ENCODE measurements at regions of chr11 and their contacts with region 1.

Region 1: DNA sequence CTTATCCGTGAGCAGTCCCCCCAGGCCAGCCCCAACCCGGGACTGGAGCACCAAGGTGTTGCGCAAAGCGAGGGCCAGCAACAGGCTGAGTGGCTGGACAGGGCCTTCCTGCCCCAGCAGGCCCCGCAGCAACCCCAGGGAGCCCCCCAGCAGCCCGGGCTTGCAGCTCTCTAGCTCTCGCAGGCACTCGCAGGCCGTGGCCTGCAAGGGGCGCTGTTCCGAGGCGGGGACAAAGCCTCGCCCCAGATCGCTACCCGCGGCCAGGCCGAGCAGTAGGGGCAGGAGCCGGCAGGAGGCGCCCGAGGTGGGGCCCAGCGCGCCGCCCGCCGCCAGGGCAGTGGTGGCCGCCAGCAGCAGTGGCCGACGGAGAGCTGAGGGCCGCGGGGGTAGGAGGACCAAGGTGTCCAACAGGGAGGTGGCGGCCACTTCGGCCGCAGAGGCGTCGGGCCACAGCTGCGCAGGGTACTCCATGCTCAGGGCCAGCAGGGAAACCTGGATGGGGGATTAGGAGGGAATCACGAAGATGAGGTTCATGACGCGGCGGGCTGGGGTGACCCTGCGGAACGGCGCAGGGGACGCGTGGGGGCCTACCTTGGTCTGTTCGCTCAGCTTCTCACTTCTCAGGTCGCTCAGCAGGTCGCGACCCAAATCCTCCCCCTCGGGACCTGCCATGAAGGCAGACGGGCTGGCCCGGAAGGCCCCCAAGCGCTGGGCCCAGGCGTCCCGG is 762 bp downstream of the AP5B1 start:
- DNase-seq: peak; percentile 96
- H3K4me3 Mint-ChIP-seq: peak overlapping the region; percentile 91
- H3K27ac Mint-ChIP-seq: peak overlapping the region; percentile 92
- H3K4me1 Mint-ChIP-seq: peaks cover 23% of the 10 kb centered on the region
- H3K27me3 Mint-ChIP-seq: peaks cover 15% of the 10 kb centered on the region

Region 2: GRCh38 chr11:65662799-65663638 is 117.0 kb before region 1 on chr11 and contains the start of gene RELA:
- intact Hi-C with region 1: no loop called
- DNase-seq: peak; percentile 97
- H3K4me3 Mint-ChIP-seq: peak within 1 kb of the TSS; percentile 92
- H3K27ac Mint-ChIP-seq: peak within 1 kb of the TSS; percentile 93
- H3K4me1 Mint-ChIP-seq: peaks cover 24% of the 10 kb centered on the region
- H3K27me3 Mint-ChIP-seq: no peaks in the 10 kb centered on the region
- total RNA-seq, gene RELA: 95.7 and 98.2 TPM in 2 replicates

Region 3: DNA sequence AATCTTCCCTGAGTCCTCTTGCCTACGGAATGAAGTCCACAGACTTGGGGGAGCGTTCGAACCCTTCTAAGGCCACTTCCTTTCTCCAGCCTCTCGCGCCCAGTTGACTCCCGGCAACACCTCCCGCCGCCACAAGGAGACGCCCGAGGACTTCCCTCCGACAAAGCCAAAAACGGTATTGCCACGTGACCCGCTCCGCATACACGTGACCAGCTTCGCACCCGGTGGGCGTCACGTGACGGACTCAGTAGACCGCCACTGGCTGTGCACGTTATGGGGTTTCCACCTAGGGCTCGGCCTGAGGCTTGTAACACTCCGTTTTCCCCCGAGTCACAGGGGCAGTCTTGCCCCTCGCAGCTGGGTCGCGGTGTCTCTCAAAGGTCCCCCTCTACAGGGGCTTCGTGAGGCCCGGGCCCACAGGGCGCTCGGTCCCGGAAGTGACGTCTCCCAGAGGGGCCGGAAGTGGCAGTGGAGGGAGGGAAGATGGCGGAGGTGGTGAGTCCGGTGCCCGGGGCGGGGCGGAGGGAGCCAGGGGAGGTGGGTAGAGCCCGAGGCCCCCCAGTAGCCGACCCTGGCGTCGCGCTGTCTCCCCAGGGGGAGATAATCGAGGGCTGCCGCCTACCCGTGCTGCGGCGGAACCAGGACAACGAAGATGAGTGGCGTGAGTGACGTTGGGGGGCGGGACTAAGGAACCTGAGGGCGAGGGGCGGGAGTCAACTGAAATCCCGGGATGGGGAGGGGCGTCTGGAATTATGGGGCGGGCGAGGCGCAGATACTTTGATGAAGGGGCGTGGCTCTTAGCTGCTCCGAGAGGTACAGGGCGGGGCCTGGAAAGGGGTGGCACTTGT is 68.0 kb before region 1 on chr11 and contains the start of gene KAT5:
- intact Hi-C with region 1: loop called (anchors 2 kb)
- DNase-seq: peak; percentile 99
- H3K4me3 Mint-ChIP-seq: peak within 1 kb of the TSS; percentile 93
- H3K27ac Mint-ChIP-seq: peak within 1 kb of the TSS; percentile 99
- H3K4me1 Mint-ChIP-seq: peaks cover 22% of the 10 kb centered on the region
- H3K27me3 Mint-ChIP-seq: no peaks in the 10 kb centered on the region
- total RNA-seq, gene KAT5: 71.6 and 72.3 TPM in 2 replicates

Region 4: DNA sequence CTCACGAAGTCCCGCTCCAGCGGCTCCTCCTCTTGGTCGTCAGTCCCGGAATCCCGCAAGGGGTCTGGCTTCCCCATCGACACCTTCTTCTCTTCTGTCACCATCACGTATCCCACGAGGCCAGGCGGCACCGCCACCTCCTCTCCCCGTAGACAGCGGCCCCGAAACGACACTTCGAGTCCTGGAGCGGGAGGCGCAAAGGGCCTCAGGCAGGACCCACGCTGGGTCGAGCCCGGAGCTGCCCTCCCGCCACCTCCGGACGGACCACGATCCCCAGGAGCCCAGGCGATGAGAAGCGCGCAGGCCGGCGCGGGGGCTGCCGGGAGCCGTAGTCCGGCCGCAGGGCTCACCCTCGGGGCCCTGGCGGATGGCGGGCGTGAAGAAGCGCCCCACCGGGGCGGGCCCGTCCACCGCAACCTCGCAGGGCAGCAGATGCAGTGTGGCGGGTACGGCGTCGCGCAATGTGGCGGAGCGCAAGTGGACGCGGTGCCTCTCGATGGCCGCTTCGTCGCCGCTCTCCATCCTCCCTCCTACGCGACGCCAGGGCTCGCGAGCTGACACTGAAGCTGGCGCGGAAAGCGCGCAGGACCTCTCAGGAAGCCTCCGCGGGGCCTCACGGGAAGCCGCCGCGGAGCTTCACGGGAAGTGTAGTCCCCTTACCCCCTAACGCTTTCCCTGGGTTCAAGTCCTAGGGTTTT is 59.6 kb before region 1 on chr11 and contains the start of gene RNASEH2C:
- intact Hi-C with region 1: loop called (anchors 1 kb)
- DNase-seq: peak; percentile 94
- H3K4me3 Mint-ChIP-seq: peak within 1 kb of the TSS; percentile 97
- H3K27ac Mint-ChIP-seq: peak within 1 kb of the TSS; percentile 96
- H3K4me1 Mint-ChIP-seq: peaks cover 25% of the 10 kb centered on the region
- H3K27me3 Mint-ChIP-seq: peaks cover 4% of the 10 kb centered on the region
- total RNA-seq, gene RNASEH2C: 86.4 and 100.0 TPM in 2 replicates

Region 5: GRCh38 chr11:65764434-65764833 is 15.6 kb before region 1 on chr11:
- intact Hi-C with region 1: no loop called
- DNase-seq: no peak
- H3K4me3 Mint-ChIP-seq: no peak overlapping the region
- H3K27ac Mint-ChIP-seq: no peak overlapping the region
- H3K4me1 Mint-ChIP-seq: no peaks in the 10 kb centered on the region
- H3K27me3 Mint-ChIP-seq: peaks cover 13% of the 10 kb centered on the region

Region 6: GRCh38 chr11:65791691-65792213 is 11.7 kb after region 1 on chr11:
- intact Hi-C with region 1: loop called (anchors 1 kb)
- DNase-seq: peak; percentile 89
- H3K4me3 Mint-ChIP-seq: no peak overlapping the region
- H3K27ac Mint-ChIP-seq: peak overlapping the region; percentile 90
- H3K4me1 Mint-ChIP-seq: peaks cover 29% of the 10 kb centered on the region
- H3K27me3 Mint-ChIP-seq: peaks cover 20% of the 10 kb centered on the region

Region 7: GRCh38 chr11:65817835-65818742 is 38.1 kb after region 1 on chr11:
- intact Hi-C with region 1: loop called (anchors 1 kb)
- DNase-seq: peak; percentile 98
- H3K4me3 Mint-ChIP-seq: peak overlapping the region; percentile 83
- H3K27ac Mint-ChIP-seq: peak overlapping the region; percentile 87
- H3K4me1 Mint-ChIP-seq: peaks cover 17% of the 10 kb centered on the region
- H3K27me3 Mint-ChIP-seq: peaks cover 2% of the 10 kb centered on the region

Region 8: GRCh38 chr11:65988791-65989592 is 209.0 kb after region 1 on chr11:
- intact Hi-C with region 1: loop called (anchors 2 kb)
- DNase-seq: peak; percentile 98
- H3K4me3 Mint-ChIP-seq: no peak overlapping the region
- H3K27ac Mint-ChIP-seq: peak overlapping the region; percentile 80
- H3K4me1 Mint-ChIP-seq: peaks cover 6% of the 10 kb centered on the region
- H3K27me3 Mint-ChIP-seq: no peaks in the 10 kb centered on the region

Measured in activated CD4-positive, alpha-beta T cell treated with anti-CD3 and anti-CD28 coated beads, Interleukin-2, amount 10 ng/mL, durations not matched to agents 24 days and 14 days (primary cell).